ENCODE measurements at regions of chr16 and their contacts with region 1.

Region 1: DNA sequence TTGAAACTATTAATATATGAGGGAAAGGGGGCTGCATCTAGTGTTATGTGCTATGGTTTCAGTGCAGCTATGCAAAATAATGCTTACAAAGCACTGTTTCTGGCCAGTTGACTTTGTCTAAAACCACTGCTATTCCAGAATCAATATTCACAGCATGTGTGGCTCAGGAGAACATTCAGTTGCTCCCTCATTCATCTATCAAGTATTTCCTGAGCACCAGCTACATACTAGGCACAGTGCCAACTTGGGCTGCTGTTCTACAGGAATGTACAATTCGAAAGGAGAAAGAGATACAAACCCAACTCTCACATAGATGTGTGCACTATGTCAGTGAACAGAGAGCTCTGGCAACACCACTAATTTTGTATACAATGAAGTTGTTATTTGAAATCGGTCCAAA is 183.0 kb downstream of the PHKB start:
- DNase-seq: no peak
- H3K4me3 ChIP-seq: no peak overlapping the region
- H3K27ac ChIP-seq: no peak overlapping the region
- H3K4me1 ChIP-seq: no peaks in the 10 kb centered on the region
- H3K27me3 ChIP-seq: no peaks in the 10 kb centered on the region
- CTCF ChIP-seq: no peak
- EP300 ChIP-seq: no peak
- POLR2A ChIP-seq: no peak

Region 2: GRCh38 chr16:47358816-47359215 is 285.4 kb before region 1 on chr16:
- in situ Hi-C with region 1: no loop called
- intact Hi-C with region 1: no loop called
- DNase-seq: no peak
- H3K4me3 ChIP-seq: no peak overlapping the region
- H3K27ac ChIP-seq: no peak overlapping the region
- H3K4me1 ChIP-seq: no peaks in the 10 kb centered on the region
- H3K27me3 ChIP-seq: no peaks in the 10 kb centered on the region
- CTCF ChIP-seq: no peak
- EP300 ChIP-seq: no peak
- POLR2A ChIP-seq: no peak

Region 3: GRCh38 chr16:47732523-47733111 is 88.5 kb after region 1 on chr16:
- in situ Hi-C with region 1: loop called in 1 of 4 experiments (anchors 25 kb)
- intact Hi-C with region 1: no loop called
- DNase-seq: no peak
- H3K4me3 ChIP-seq: no peak overlapping the region
- H3K27ac ChIP-seq: no peak overlapping the region
- H3K4me1 ChIP-seq: peaks cover 0 to 7% (median 0%) of the 10 kb centered on the region in 4 donors
- H3K27me3 ChIP-seq: no peaks in the 10 kb centered on the region
- CTCF ChIP-seq: no peak
- EP300 ChIP-seq: no peak
- POLR2A ChIP-seq: no peak

Region 4: GRCh38 chr16:47928008-47928407 is 283.8 kb after region 1 on chr16:
- in situ Hi-C with region 1: no loop called
- intact Hi-C with region 1: no loop called
- DNase-seq: no peak
- H3K4me3 ChIP-seq: no peak overlapping the region
- H3K27ac ChIP-seq: no peak overlapping the region
- H3K4me1 ChIP-seq: no peaks in the 10 kb centered on the region
- H3K27me3 ChIP-seq: no peaks in the 10 kb centered on the region
- CTCF ChIP-seq: no peak
- EP300 ChIP-seq: no peak
- POLR2A ChIP-seq: no peak